ENCODE measurements at regions of chr22 and their contacts with region 1.

Region 1: DNA sequence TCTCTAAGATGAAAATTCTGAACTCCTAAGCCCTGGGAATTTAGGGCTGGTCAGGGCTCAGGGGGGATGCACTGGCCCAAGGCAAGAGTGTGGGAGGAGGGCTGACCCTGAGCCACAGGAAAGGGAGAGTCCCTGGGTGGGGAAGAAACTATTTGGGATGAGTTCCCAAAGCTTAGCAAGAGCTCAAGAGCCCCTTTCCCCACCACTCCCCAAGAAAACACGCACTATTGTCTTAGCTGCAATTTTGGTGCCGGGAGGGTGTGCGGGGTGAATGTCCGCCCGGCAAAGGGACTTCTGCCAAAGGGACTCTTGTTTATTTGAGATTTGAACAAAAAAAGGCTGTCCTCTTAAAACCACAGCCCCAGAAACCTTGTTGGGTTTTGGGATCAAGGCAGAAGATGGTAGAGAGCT is 37.0 kb downstream of the KIAA1671 start:
- DNase-seq: peak; percentile 51
- H3K4me3 Mint-ChIP-seq: peak overlapping the region; percentile 38
- H3K27ac Mint-ChIP-seq: peak overlapping the region; percentile 91
- H3K4me1 Mint-ChIP-seq: peaks cover 56% of the 10 kb centered on the region
- H3K27me3 Mint-ChIP-seq: no peaks in the 10 kb centered on the region
- CTCF ChIP-seq: no peak

Region 2: DNA sequence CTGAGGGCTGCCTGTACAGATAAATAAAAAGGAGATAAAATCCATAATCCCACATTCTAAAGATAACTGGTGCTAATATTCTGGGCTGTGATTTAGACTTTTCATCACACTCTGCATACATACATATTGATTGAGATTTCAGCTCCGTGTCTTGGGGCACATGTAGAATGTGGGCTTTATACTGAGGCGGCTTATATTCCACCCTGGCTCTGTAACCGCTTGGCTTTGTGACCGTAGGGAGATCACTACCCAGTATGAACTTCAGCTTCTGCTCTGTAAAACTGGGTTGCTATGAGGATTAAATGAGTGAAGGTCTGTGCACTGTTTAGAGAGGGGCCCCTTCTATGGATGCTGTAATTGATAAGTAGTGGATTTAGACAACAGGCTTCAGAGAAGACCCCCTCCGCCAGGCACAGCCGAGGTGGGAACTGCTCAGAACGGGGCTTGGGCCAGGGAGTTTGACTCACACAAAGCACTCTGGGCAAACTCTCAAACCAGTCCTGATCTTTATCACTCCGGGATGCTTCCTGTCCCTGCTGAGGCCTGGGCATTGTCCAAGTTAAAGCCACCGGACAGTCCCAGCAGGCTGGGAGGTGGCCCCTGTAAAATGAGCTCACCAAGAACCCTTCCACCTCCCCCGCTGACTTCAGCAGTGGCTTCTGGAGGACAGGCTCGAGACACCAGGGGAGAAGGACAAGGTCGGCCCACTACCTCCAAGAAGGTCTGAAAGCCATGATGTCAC is 19.8 kb before region 1 on chr22:
- CTCF ChIA-PET with region 1: interaction called, 6 read pairs
- POLR2A ChIA-PET with region 1: interaction called, 468 read pairs
- intact Hi-C with region 1: loop called (anchors 1 kb)
- DNase-seq: peak; percentile 71
- H3K4me3 Mint-ChIP-seq: peak overlapping the region; percentile 30
- H3K27ac Mint-ChIP-seq: peak overlapping the region; percentile 89
- H3K4me1 Mint-ChIP-seq: peaks cover 51% of the 10 kb centered on the region
- H3K27me3 Mint-ChIP-seq: no peaks in the 10 kb centered on the region
- CTCF ChIP-seq: no peak

Region 3: GRCh38 chr22:24977370-24978221 is 11.9 kb before region 1 on chr22:
- CTCF ChIA-PET with region 1: interaction called, 13 read pairs
- POLR2A ChIA-PET with region 1: interaction called, 468 read pairs
- intact Hi-C with region 1: no loop called
- DNase-seq: peak; percentile 85
- H3K4me3 Mint-ChIP-seq: peak overlapping the region; percentile 50
- H3K27ac Mint-ChIP-seq: peak overlapping the region; percentile 95
- H3K4me1 Mint-ChIP-seq: peaks cover 49% of the 10 kb centered on the region
- H3K27me3 Mint-ChIP-seq: no peaks in the 10 kb centered on the region
- CTCF ChIP-seq: no peak